Heart left ventricle (tissue), 16 donors: ENCODE measurements at regions of chr18 and their contacts with region 1.

Region 1: DNA sequence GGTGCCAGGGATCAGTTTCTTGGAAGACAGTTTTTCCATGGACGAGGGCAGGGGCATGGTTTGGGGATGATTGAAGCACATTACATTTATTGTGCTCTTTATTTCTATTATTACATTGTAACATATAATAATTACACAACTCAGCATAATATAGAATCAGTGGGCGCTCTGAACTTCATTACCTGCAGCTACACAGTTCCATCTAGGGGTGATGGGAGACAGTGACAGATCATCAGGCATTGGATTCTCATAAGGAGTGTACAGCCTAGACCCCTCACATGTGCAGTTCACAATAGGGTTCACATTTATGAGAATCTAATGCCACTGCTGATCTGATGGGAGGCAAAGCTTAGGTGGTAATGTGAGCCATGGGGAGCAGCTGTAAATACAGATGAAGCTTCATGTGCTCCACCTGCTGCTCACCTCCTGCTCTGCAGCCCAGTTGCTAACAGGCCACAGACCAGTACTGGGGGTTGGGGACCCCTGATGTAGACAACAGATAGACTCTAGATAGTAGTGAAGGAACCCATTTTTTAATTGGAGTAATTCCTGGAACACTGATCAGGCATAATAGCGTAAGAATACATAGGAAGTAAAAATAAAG is 41.5 kb upstream of the MC4R start:
- DNase-seq: no peak
- ATAC-seq: no peak
- H3K4me3 ChIP-seq: no peak overlapping the region
- H3K27ac ChIP-seq: no peak overlapping the region
- H3K4me1 ChIP-seq: no peaks in the 10 kb centered on the region
- H3K27me3 ChIP-seq: no peaks in the 10 kb centered on the region
- CTCF ChIP-seq: no peak
- POLR2A ChIP-seq: no peak

Region 2: GRCh38 chr18:60471652-60472051 is 57.6 kb after region 1 on chr18:
- intact Hi-C with region 1: loop called in 1 of 10 experiments (anchors 10 kb)
- DNase-seq: no peak
- ATAC-seq: peak in 2 of 4 donors; percentile 41 to 88
- H3K4me3 ChIP-seq: no peak overlapping the region
- H3K27ac ChIP-seq: no peak overlapping the region
- H3K4me1 ChIP-seq: no peaks in the 10 kb centered on the region
- H3K27me3 ChIP-seq: no peaks in the 10 kb centered on the region
- CTCF ChIP-seq: no peak
- POLR2A ChIP-seq: no peak